ENCODE measurements at regions of chr3 and their contacts with region 1.

Region 1: GRCh38 chr3:56682462-56683121 is 473 bp downstream of the TASOR start:
- DNase-seq: peak; percentile 53 to 58
- ATAC-seq: peak; percentile 85
- H3K4me3 ChIP-seq: peak overlapping the region; percentile 86 to 98 (median 94)
- H3K27ac ChIP-seq: peak overlapping the region; percentile 97 to 99 (median 98)
- H3K4me1 ChIP-seq: peaks cover 13 to 14% of the 10 kb centered on the region in 2 donors
- H3K27me3 ChIP-seq: no peaks in the 10 kb centered on the region
- CTCF ChIP-seq: peak in 1 of 5 experiments; percentile 15
- POLR2A ChIP-seq: peak in 1 of 2 donors; percentile 28

Region 2: DNA sequence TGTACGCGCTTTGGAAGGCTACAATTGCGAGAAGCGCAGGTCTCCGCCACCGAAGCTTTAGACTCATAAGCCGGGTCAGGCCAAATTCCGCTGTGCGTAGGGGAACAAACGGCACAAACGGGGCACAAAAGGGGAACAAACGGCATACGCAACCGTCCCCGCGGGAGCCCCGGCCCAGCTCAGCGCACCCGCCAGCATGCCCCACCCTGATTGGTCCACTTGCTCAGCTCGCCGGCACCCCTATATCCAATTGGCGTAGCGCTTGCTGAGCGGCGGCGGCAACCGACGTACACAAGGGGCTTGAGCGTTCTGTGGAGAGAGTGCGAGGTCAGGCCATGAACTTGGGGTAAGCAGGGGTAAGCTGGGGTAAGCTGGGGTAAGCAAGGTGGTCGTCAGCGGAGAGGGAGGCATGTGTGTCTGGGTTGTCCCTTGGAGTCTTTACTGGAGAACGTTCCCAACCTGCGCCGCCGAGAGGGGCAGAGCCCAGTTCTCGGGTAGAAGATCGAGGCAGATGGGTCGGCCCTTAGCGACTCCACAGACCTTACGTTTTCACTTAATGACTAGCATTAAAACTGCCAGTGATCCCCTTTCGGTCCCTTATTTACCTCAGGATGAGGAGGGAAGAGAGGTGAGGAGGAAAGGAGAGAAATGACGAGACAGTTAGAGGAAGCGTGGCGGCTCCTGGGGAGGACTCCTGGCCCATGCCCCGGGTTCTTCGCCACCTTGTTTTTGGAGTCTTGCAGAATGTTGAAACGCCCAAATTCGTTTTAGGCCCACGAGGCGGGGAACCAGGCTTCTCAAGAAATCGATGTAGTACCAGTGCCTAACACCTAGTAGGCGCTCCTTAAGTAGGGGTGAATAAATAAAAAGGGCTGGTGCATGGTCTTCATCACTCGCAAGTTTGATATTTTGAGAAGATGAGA is 125.4 kb before region 1 on chr3 and contains the start of gene CCDC66:
- in situ Hi-C with region 1: no loop called
- intact Hi-C with region 1: loop called (anchors 2 kb)
- DNase-seq: peak; percentile 95
- ATAC-seq: peak; percentile 98 to 99
- H3K4me3 ChIP-seq: peak within 1 kb of the TSS; percentile 60 to 87 (median 83)
- H3K27ac ChIP-seq: peak within 1 kb of the TSS; percentile 82 to 91 (median 89)
- H3K4me1 ChIP-seq: peaks cover 10 to 12% of the 10 kb centered on the region in 2 donors
- H3K27me3 ChIP-seq: no peaks in the 10 kb centered on the region
- CTCF ChIP-seq: peak; percentile 51 to 74 (median 57)
- POLR2A ChIP-seq: peak; percentile 77 to 78
- total RNA-seq, gene CCDC66: 7.9 to 14.5 (median 9.3) TPM

Region 3: DNA sequence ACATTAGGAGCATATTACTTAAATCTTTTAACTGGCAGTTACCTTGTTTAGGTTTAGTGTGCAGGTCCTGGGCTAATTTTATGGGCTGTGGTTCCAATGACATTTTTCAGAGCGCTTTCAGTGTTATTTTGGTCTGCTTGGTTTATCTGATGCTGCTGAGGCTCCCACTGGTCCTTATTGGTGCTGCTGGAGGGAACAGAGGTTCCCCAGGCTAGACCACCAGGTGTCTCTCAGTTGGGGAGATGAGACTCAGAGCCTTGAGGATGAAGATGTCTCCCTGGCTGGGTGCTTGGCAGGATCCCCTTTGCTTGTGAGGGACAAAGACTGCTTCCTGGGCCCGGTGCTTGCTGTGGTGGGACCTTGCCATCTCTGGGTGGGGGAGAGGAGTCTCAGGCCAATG is 28.8 kb after region 1 on chr3:
- in situ Hi-C with region 1: no loop called
- intact Hi-C with region 1: no loop called
- DNase-seq: no peak
- ATAC-seq: no peak
- H3K4me3 ChIP-seq: no peak overlapping the region
- H3K27ac ChIP-seq: no peak overlapping the region
- H3K4me1 ChIP-seq: no peaks in the 10 kb centered on the region
- H3K27me3 ChIP-seq: no peaks in the 10 kb centered on the region
- CTCF ChIP-seq: no peak
- POLR2A ChIP-seq: no peak

Region 4: DNA sequence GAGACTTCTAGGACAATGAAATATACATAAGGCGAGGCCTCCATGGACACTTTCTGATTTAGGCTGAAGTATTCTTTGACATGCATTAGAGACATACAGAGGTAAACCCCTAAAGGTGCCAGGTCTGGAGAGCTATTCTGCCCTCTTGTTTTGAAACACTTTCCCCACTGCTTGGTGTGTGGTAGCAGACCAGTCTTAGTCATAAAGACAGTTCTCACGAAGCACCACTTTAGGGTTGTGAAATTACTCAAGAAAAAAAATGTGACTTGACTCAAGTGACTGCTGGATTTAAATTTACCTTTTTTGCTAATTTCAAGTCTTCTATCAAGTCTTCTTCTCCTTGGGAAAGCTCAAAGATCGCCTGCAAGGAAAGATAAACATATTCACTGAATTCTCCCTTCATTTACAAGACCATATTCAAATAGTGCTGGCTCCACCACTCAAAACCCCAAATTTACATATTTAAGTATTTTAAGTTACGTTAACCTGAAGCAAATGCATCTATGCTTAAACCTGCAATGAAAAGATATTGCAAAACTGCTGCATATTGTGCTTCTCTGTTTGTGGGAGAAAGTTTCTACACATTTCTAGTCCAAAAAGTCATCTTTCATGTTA is 70.7 kb after region 1 on chr3:
- in situ Hi-C with region 1: no loop called
- intact Hi-C with region 1: no loop called
- DNase-seq: no peak
- ATAC-seq: no peak
- H3K4me3 ChIP-seq: no peak overlapping the region
- H3K27ac ChIP-seq: no peak overlapping the region
- H3K4me1 ChIP-seq: peaks cover 22 to 27% of the 10 kb centered on the region in 2 donors
- H3K27me3 ChIP-seq: no peaks in the 10 kb centered on the region
- CTCF ChIP-seq: no peak
- POLR2A ChIP-seq: no peak

Region 5: DNA sequence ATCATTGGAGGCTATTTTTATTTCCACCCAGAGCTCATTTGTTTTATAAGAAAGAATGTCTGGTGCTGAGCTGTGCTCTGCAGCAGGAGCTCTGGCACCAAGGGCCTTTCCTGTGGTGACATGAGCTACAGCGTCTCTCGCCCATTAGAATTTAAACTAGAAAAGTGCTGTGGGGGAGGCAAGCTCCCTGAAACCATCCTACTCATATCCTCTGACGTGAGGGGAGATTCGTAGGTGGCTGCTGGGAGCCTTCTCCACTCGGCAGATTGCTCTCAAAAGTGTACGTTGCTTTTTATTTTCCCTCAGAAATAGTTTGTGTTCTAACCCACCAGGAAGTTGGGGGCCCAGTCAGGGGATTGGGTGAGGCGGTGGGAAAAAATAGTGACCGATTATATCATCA is 195.5 kb after region 1 on chr3:
- in situ Hi-C with region 1: no loop called
- intact Hi-C with region 1: no loop called
- DNase-seq: no peak
- ATAC-seq: no peak
- H3K4me3 ChIP-seq: no peak overlapping the region
- H3K27ac ChIP-seq: no peak overlapping the region
- H3K4me1 ChIP-seq: peaks cover 0 to 4% of the 10 kb centered on the region in 2 donors
- H3K27me3 ChIP-seq: no peaks in the 10 kb centered on the region
- CTCF ChIP-seq: no peak
- POLR2A ChIP-seq: no peak

Measured in gastrocnemius medialis (tissue), 4 donors.